CD8-positive, alpha-beta T cell (primary cell): ENCODE measurements at regions of chr11 and their contacts with region 1.

Region 1: GRCh38 chr11:17389211-17389956 is 925 bp upstream of the KCNJ11 start:
- DNase-seq: peak; percentile 60 to 89 (median 83)
- ATAC-seq: peak; percentile 91
- H3K4me3 ChIP-seq: peak overlapping the region; percentile 69 to 75
- H3K4me3 Mint-ChIP-seq: peak overlapping the region; percentile 85
- H3K27ac ChIP-seq: no peak overlapping the region
- H3K27ac Mint-ChIP-seq: no peak overlapping the region
- H3K4me1 ChIP-seq: peaks cover 9% of the 10 kb centered on the region
- H3K4me1 Mint-ChIP-seq: peaks cover 8% of the 10 kb centered on the region
- H3K27me3 ChIP-seq: peaks cover 0 to 2% of the 10 kb centered on the region in 2 experiments
- H3K27me3 Mint-ChIP-seq: no peaks in the 10 kb centered on the region
- CTCF ChIP-seq: peak; percentile 71

Region 2: GRCh38 chr11:16815043-16815767 is 574.2 kb before region 1 on chr11:
- CTCF ChIA-PET with region 1: interaction called, 4 read pairs
- POLR2A ChIA-PET with region 1: no interaction called
- intact Hi-C with region 1: loop called (anchors 5 to 10 kb)
- DNase-seq: no peak
- ATAC-seq: no peak
- H3K4me3 ChIP-seq: no peak overlapping the region
- H3K4me3 Mint-ChIP-seq: no peak overlapping the region
- H3K27ac ChIP-seq: no peak overlapping the region
- H3K27ac Mint-ChIP-seq: peak overlapping the region; percentile 27
- H3K4me1 ChIP-seq: no peaks in the 10 kb centered on the region
- H3K4me1 Mint-ChIP-seq: no peaks in the 10 kb centered on the region
- H3K27me3 ChIP-seq: no peaks in the 10 kb centered on the region
- H3K27me3 Mint-ChIP-seq: peaks cover 3% of the 10 kb centered on the region
- CTCF ChIP-seq: no peak